Heart left ventricle (tissue), 16 donors: ENCODE measurements at regions of chr19 and their contacts with region 1.

Region 1: GRCh38 chr19:12806239-12807081 is at the start of gene RNASEH2A:
- DNase-seq: peak; percentile 90 to 96 (median 92)
- ATAC-seq: peak; percentile 87 to 95 (median 91)
- H3K4me3 ChIP-seq: peak within 1 kb of the TSS; percentile 18 to 85 (median 66)
- H3K27ac ChIP-seq: peak within 1 kb of the TSS in 10 of 12 donors; percentile 3 to 72 (median 62)
- H3K4me1 ChIP-seq: peaks cover 6 to 26% (median 17%) of the 10 kb centered on the region in 12 donors
- H3K27me3 ChIP-seq: peaks cover 0 to 2% (median 0%) of the 10 kb centered on the region in 9 donors
- CTCF ChIP-seq: peak in 3 of 12 donors; percentile 11 to 18 (median 14)
- POLR2A ChIP-seq: peak in 1 of 2 donors; percentile 48
- total RNA-seq, gene RNASEH2A: 0.63 to 7.6 (median 4.0) TPM

Region 2: GRCh38 chr19:12722566-12723380 is 83.7 kb before region 1 on chr19:
- intact Hi-C with region 1: loop called in 2 of 10 experiments (anchors 5 kb)
- DNase-seq: peak; percentile 96 to 99 (median 98)
- ATAC-seq: peak; percentile 92 to 96 (median 94)
- H3K4me3 ChIP-seq: peak overlapping the region; percentile 65 to 98 (median 79)
- H3K27ac ChIP-seq: peak overlapping the region; percentile 88 to 98 (median 96)
- H3K4me1 ChIP-seq: peaks cover 4 to 44% (median 33%) of the 10 kb centered on the region in 12 donors
- H3K27me3 ChIP-seq: no peaks in the 10 kb centered on the region
- CTCF ChIP-seq: no peak
- POLR2A ChIP-seq: no peak

Region 3: DNA sequence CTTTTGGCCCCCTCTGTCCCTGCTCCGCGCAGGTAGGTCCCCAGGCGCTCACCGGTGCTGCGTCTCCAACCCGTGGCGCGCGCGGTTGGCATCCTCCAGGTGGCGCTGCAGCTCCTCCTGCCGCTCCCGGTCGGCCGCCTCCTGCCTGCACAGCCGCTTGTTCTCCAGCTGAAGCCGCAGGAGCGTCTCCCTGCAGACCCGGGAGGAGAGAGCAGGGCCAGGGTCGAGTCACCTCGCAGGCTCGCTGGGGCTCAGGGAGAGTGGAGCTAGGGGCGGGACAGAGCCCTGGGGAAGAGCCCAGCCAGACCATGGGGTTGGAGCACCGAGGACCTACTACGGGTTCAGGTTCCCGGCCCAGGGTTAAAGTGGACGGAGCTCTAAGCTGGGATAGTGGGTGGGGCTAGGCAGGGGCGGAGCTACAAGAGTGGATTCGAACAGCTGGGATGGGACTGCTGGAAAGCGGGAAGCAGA is 40.4 kb before region 1 on chr19:
- intact Hi-C with region 1: loop called in 1 of 10 experiments (anchors 5 kb)
- DNase-seq: peak; percentile 77 to 93 (median 88)
- ATAC-seq: peak in 3 of 4 donors; percentile 66 to 85 (median 76)
- H3K4me3 ChIP-seq: peak overlapping the region in 9 of 12 donors; percentile 14 to 61 (median 48)
- H3K27ac ChIP-seq: peak overlapping the region in 11 of 12 donors; percentile 15 to 82 (median 61)
- H3K4me1 ChIP-seq: peaks cover 0 to 39% (median 9%) of the 10 kb centered on the region in 12 donors
- H3K27me3 ChIP-seq: no peaks in the 10 kb centered on the region
- CTCF ChIP-seq: peak in 10 of 12 donors; percentile 66 to 99 (median 84)
- POLR2A ChIP-seq: peak in 1 of 2 donors; percentile 35

Region 4: DNA sequence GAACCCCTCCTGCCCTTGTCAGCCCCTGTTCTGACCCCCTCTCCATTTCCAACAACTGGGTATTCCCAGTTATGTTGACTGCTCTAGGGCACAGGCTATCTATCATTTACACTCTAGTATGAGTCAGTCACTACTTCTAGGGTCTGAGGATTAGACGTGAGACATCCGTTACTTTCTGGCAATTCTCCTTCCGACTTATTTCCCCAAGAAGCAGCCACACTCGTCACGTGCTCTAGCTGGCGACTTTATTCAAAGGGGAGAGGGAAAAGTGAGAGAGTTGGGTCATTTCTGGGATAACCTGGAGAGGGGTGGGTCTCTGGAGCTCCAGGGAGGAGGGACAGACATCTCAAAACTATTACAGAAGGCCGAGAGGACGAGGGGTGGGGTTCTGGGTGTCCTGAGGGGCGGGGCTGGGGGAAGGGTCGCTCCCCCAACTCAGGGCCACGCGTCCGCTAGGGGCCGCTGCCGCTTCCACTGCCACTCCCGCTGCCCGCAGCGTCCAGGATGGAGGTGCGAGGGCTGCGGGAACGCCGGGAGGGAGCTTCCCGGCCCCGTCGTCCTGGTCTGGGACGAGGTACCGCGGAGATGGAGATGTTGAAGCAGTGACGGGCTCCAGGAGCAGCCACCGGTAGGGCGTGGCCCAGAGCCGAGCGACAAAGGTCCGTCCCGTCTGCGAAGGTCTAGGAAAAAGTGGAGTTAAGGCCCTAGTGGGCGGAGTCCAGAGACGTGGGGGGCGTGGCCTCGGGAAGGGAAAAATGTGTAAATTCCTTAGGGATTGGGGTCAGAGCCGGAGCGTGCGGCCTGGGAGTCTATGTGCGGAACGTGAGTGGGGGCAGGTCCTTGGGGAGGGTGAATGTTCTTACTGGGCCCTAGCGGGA is 19.0 kb after region 1 on chr19:
- intact Hi-C with region 1: no loop called
- DNase-seq: no peak
- ATAC-seq: no peak
- H3K4me3 ChIP-seq: no peak overlapping the region
- H3K27ac ChIP-seq: no peak overlapping the region
- H3K4me1 ChIP-seq: peaks cover 0 to 11% (median 0%) of the 10 kb centered on the region in 12 donors
- H3K27me3 ChIP-seq: peaks cover 18 to 70% (median 57%) of the 10 kb centered on the region in 9 donors
- CTCF ChIP-seq: peak in 5 of 12 donors; percentile 6 to 39 (median 29)
- POLR2A ChIP-seq: no peak

Region 5: DNA sequence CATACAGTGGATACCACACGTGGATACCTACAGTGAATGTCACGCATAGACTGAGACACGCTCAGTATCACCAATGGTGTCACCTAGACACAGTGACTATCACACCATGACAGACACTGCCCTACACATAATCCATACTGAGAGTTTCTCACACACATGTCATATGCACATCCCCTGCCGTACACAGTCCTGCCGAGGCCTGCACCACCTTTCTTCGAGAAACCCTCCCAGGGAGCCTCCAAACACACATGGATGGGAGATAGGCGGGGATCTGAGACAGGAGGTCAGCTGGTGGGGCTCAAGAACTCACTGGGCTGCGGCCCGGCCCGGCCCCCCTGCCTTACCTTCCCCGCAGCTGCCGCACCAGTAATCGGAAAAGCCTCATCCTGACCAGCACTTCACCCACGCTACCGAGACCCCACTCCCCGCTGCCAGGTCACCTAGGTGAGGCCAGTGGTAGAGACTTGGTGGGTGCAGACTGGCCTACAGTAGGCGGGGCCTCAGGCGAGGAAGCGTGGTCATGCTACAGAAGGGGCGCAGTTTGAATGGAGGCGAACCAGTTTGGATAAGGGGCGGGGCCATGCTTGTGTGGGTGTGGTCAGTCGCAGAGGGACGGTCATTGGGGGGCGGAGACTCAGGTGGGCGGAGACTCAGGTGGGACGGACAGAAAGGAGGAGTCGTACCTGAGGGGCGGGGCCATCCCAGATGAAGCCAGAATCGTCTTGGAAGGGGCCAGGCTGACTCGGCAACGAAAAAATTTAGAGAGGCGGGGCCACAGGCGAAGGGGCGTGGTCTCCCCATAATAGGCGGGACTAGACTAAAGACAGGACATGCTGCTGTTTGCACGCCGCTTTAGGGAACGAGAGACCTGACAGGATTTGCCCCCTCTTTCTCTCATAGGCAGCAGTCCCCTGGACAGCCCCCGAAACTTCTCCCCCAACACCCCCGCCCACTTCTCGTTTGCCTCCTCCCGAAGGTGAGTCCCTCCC is 33.9 kb after region 1 on chr19:
- intact Hi-C with region 1: loop called in 1 of 10 experiments (anchors 5 kb)
- DNase-seq: peak in 1 of 5 donors; percentile 42
- ATAC-seq: peak in 3 of 4 donors; percentile 25 to 49 (median 29)
- H3K4me3 ChIP-seq: peak overlapping the region in 7 of 12 donors; percentile 4 to 35 (median 16)
- H3K27ac ChIP-seq: no peak overlapping the region
- H3K4me1 ChIP-seq: peaks cover 0 to 19% (median 4%) of the 10 kb centered on the region in 12 donors
- H3K27me3 ChIP-seq: peaks cover 29 to 99% (median 84%) of the 10 kb centered on the region in 9 donors
- CTCF ChIP-seq: no peak
- POLR2A ChIP-seq: no peak